HEK293 (cell line): ENCODE measurements at regions of chr6 and their contacts with region 1.

Region 1: GRCh38 chr6:43506667-43507471 is 3.3 kb downstream of the LRRC73 start:
- H3K4me3 ChIP-seq: no peak overlapping the region
- H3K27ac ChIP-seq: no peak overlapping the region
- H3K4me1 ChIP-seq: no peaks in the 10 kb centered on the region
- CTCF ChIP-seq: peak; percentile 88

Region 2: DNA sequence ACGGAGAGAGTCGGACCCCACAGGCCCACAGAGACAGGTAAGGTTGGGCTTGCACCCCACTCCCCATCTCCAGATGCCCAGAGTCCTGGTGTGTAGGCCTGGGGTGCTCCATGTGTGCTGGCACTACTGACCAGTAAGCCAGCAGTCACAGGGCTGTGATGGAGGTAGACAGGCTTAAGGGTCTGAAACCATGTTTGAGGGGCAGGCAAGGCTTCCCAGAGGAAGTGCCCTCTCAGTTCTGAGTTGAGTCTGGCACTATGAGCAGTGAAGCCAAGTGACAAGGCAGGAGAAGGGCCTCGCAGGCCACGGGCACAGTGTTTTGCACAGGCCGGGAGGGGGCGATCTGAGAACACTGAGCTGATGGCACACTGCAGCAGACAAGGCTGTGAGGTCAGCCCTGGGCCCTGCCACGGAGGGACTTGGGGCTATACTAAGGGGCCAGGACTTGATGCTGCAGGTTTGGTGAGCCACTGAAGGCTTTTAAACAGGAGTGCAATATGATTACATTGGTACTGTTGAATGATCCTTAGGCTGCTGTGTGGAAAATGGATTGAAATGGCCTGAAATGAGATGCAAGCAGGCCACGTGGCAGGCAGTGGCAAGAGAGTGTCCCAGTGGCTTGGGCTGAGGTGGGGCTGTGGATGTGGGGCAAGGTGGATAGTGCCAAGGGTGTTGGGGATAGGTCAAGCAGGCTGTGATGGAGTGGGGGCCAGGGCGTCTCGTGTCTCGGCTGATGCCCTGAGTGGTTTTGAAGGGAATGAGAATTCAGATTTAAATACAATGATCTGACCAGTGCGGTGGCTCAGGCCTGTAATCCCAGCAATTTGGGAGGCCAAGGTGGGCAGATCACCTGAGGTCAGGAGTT is 243.3 kb before region 1 on chr6:
- CTCF ChIA-PET with region 1: interaction called, 16 read pairs
- POLR2A ChIA-PET with region 1: no interaction called
- H3K4me3 ChIP-seq: no peak overlapping the region
- H3K27ac ChIP-seq: no peak overlapping the region
- H3K4me1 ChIP-seq: no peaks in the 10 kb centered on the region
- CTCF ChIP-seq: peak; percentile 88

Region 3: DNA sequence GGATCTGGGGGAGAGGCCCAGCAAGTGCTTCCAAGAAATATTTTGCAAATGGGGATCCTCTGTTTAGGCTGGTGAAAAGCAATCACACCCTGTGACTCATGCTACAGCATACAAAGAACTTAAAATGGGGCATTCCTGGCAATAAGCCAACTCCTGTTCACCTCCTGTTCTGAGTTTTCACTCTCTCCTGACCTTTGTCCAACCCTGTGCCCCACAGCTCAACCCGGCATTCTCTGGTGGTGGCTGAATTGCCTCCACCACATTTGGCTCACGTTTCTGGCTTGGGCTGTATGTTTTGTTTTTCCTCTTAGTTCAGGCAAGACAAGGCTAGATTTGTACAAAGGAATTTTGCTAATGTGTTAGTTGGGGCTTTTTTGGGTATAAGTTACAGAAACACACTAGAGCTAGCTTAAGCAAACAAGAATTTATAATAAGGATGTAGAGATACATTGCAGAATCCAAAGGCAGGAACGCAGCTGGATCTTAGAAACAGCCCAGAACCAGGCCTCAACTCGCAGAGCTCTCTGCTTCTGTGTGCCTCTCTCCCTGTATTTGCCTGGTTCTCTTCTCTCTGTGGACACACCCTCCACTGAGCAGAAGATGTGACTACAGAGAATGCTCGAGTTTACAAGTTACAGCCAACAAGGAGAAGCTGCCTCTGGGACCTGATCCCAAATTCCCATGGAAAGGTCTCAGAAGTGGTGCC is 70.1 kb before region 1 on chr6:
- CTCF ChIA-PET with region 1: interaction called, 16 read pairs
- POLR2A ChIA-PET with region 1: interaction called, 3 read pairs
- H3K4me3 ChIP-seq: no peak overlapping the region
- H3K27ac ChIP-seq: no peak overlapping the region
- H3K4me1 ChIP-seq: peaks cover 6% of the 10 kb centered on the region
- CTCF ChIP-seq: no peak

Region 4: DNA sequence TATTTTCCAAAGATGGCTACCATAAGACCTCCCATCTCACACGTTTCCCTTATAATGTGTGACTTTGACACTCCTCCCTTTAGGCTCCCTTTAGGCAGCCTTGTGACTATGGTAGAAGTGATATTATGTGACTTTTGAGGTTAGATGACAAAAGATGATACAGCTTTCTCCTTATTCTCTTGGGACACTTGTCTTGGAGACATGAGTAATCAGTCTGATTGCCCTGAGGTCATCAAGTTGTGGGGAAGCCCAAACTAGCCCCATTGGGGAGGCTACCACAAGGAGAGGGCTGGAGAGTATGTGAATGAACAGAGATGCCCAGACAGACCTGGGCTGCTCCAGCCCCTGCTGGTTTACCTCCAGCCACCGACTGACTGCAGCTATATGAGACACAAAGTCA is 40.9 kb before region 1 on chr6:
- CTCF ChIA-PET with region 1: interaction called, 11 read pairs
- POLR2A ChIA-PET with region 1: no interaction called
- H3K4me3 ChIP-seq: no peak overlapping the region
- H3K27ac ChIP-seq: no peak overlapping the region
- H3K4me1 ChIP-seq: peaks cover 5% of the 10 kb centered on the region; the same call in 1 of the 2 replicates
- CTCF ChIP-seq: no peak

Region 5: GRCh38 chr6:43489277-43490072 is 17.4 kb before region 1 on chr6:
- CTCF ChIA-PET with region 1: interaction called, 142 read pairs
- POLR2A ChIA-PET with region 1: interaction called, 3 read pairs
- H3K4me3 ChIP-seq: no peak overlapping the region
- H3K27ac ChIP-seq: no peak overlapping the region
- H3K4me1 ChIP-seq: no peaks in the 10 kb centered on the region
- CTCF ChIP-seq: no peak

Region 6: DNA sequence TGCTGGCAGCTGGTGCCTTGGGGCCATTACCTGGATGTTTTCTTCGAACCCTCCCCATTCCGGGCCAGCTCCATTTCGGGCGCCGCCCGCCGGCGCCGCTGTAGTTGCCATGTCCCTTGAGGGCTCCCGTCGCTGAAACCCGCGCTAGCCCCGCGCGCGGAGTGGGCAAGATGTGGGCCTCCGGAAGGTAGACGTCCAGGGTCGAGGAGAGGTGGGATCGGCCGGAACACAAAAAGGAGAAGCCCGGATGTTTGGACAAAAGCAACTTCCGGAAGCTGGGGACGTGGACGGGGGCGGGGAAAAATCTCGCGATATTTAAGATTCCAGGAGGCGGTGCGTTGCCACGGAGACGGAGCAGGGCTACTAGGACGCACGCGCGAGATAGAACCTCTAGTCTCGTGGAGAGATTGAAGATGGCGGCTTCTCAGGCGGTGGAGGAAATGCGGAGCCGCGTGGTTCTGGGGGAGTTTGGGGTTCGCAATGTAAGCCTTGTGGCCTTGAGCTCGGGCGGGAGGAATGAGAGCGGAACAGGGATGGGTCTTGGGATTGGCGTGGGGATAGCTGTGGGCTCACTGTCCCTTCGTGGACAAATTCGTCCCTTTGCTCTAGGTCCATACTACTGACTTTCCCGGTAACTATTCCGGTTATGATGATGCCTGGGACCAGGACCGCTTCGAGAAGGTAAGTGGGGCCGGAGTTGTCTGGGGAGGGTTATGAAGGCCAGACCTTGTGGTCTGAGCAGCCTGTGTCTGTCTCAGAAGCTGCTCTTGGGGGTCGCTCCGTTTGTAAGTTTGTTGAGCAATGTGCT is 10.0 kb after region 1 on chr6 and contains the starts of genes POLR1C and YIPF3:
- CTCF ChIA-PET with region 1: interaction called, 20 read pairs
- POLR2A ChIA-PET with region 1: interaction called, 14 read pairs
- H3K4me3 ChIP-seq: peak within 1 kb of the TSS; percentile 88
- H3K27ac ChIP-seq: peak within 1 kb of the TSS; percentile 57
- H3K4me1 ChIP-seq: peaks cover 9% of the 10 kb centered on the region; the same call in 1 of the 2 replicates
- CTCF ChIP-seq: no peak

Region 7: DNA sequence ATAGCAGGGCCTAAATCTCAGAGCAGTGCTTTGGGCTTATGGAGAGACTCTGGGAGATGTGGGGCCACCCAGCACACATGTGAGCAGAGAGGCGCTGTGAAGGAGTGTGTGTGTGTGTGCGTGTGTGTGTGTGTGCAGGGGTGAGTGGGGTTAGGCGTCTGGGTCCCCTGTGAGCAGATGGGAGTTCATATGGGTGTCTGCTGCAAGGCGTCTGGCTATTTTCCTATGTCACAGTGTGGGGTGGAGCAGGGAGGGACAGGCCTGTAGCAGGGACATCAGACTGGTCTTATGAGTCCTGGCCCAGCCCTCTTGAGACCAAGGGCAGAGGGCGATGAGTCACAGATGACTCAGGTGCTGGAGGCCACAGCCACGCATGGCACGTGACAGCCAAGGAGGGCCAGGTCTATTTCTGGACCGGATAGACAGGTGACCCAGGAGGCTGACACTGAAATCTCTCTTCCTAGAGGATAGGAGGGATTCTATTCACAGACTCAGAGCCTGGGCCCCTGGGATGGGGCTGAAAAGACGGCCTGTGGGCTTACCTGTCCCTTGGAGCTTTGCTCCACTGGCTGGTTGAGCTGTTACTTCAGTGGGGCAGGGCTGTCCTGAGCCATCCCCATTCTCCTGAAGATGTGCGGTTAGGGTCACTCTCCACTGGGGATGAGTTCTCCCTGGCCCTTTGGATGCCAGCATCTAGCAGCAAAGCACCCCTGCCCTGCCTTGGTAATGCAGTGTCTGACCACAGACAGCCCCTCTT is 292.0 kb after region 1 on chr6:
- CTCF ChIA-PET with region 1: no interaction called
- POLR2A ChIA-PET with region 1: no interaction called
- H3K4me3 ChIP-seq: no peak overlapping the region
- H3K27ac ChIP-seq: no peak overlapping the region
- H3K4me1 ChIP-seq: no peaks in the 10 kb centered on the region
- CTCF ChIP-seq: no peak